Left colon (tissue), 2 donors: ENCODE measurements at regions of chr12 and their contacts with region 1.

Region 1: GRCh38 chr12:56571126-56571525 is 49.5 kb downstream of the RBMS2 start:
- DNase-seq: no peak
- ATAC-seq: no peak

Region 2: GRCh38 chr12:56375598-56376434 is 195.3 kb before region 1 on chr12:
- intact Hi-C with region 1: no loop called
- DNase-seq: peak in 1 of 2 donors; percentile 11
- ATAC-seq: no peak

Region 3: DNA sequence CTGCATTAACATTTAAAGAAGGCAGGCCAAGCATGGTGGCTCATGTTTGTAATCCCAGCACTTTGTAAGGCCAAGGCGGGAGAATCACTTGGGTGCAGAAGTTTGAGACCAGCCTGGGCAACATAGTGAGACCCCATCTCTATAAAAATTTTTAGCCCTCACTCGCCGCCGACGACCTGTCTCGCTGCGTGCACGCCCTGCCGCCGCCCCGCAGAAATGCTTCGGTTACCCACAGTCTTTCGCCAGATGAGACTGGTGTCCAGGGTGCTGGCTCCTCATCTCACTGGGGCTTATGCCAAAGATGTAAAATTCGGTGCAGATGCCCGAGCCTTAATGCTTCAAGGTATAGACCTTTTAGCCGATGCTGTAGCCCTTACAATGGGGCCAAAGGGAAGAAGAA is 60.3 kb before region 1 on chr12:
- intact Hi-C with region 1: loop called (anchors 5 to 10 kb)
- DNase-seq: no peak
- ATAC-seq: no peak

Region 4: DNA sequence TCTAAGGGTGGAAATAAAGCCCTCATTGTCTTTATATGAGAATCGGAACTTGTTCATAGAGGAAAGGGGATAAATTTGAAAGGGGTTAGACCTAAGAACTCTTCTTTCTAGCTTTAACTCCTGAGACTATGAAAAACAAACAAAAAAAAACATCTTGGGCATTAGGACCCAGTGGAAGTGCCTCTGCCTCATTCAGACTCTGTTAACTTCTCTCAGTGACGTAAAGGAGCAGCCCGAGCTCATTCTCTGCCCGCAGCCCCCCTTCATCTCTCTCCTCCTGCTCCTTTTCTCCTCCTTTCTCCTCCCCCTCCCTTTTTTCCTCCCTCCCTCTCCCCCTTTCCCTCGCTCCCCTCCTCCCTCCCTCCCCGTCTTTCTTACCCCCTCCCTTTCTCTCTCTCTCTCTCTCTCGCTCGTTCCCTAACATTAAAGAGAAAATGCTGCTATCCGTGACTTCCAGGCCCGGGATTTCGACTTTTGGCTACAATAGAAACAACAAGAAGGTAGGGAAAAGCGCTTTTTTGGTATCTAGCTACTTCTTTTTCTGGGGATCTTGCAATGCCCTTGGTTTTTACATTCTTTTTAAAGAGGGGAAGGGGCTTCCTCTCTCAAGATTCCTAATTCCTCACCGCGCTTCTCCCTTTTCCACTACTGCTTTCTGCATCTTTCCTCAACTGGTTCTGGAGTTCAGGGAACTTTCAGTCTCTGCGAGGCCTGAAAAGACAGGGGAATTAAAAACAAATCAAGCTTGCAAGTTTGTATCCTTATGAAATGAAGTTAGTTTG is 49.3 kb before region 1 on chr12 and contains the start of gene RBMS2:
- intact Hi-C with region 1: loop called in 1 of 2 experiments (anchors 10 kb)
- DNase-seq: peak; percentile 69 to 90
- ATAC-seq: peak; percentile 93
- total RNA-seq, gene RBMS2: 33.9 to 40.2 TPM